ENCODE measurements at regions of chr1 and their contacts with region 1.

Region 1: GRCh38 chr1:39431927-39432326 is 59.5 kb upstream of the BMP8A start:
- DNase-seq: no peak
- H3K4me3 ChIP-seq: no peak overlapping the region
- H3K27ac ChIP-seq: peak overlapping the region; percentile 52
- H3K27me3 ChIP-seq: no peaks in the 10 kb centered on the region
- CTCF ChIP-seq: no peak

Region 2: GRCh38 chr1:39354572-39354971 is 77.4 kb before region 1 on chr1:
- CTCF ChIA-PET with region 1: interaction called, 13 read pairs
- POLR2A ChIA-PET with region 1: no interaction called
- DNase-seq: no peak
- H3K4me3 ChIP-seq: no peak overlapping the region
- H3K27ac ChIP-seq: no peak overlapping the region
- H3K27me3 ChIP-seq: no peaks in the 10 kb centered on the region
- CTCF ChIP-seq: 0 out of 2 replicates have a peak, but pooled peaks have one; percentile 8

Region 3: DNA sequence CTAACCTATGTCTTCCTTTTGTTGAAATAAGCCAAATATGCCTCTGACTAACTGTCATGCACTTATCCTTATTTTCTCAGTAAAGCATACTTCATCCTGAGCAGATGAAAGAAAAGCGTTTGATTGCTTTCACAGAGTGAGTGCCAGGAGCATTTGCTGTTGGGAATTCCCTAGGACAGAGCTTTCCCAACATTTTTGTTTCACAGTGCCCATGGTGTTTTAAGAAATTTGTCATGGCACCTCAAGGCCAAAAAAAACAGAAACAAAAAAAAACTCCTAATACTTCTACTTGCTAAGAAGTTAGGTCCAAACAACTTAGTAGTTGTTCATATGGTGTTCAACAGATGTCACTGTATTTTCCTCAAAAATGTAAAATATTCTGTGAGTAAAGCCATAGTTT is 61.3 kb before region 1 on chr1:
- CTCF ChIA-PET with region 1: no interaction called
- POLR2A ChIA-PET with region 1: interaction called, 13 read pairs
- DNase-seq: no peak
- H3K4me3 ChIP-seq: no peak overlapping the region
- H3K27ac ChIP-seq: no peak overlapping the region
- H3K27me3 ChIP-seq: no peaks in the 10 kb centered on the region
- CTCF ChIP-seq: no peak